GM12878 (cell line): ENCODE measurements at regions of chr6 and their contacts with region 1.

Region 1: DNA sequence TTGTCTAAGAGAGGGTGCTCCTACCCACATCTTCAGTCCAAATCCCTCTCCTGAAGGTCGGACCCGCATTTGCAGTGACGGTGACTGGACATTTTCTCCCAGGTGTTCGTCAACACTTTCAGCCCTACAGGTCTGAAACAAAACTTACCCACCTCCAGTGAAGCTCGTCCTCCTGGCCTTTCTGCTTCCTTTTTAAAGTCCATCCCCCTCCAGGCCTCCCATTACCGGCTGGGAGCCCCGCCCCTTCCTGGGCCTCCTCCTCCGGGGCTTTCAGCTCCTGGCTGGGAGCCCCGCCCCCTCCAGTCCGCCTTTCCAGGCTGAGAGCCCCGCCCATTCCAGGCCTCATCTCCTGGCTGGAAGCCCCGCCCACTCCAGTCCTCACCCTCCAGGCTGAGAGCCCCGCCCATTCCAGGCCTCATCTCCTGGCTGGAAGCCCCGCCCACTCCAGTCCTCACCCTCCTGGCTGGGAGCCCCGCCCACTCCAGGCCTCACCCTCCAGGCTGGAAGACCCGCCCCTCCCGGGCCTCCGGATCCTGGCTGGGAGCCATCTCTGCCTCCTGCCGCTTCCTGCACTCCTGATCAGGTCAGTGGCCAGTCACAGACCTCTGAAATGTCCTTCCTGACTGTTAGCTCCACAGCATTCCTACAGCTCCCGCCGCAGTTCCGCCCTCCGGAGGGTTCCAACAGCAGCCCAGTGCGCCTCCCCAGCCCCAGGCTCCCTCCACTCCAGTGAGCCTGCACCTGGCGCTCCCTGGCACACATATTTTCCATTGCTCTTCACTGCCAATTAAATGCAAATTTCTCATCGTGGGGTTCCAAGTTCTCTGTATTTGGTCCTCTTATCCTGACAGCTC is 98.5 kb downstream of the LY86 start:
- DNase-seq: no peak
- ATAC-seq: no peak
- H3K4me3 ChIP-seq: no peak overlapping the region
- H3K27ac ChIP-seq: no peak overlapping the region
- H3K4me1 ChIP-seq: peaks cover 38% of the 10 kb centered on the region
- H3K27me3 ChIP-seq: no peaks in the 10 kb centered on the region
- CTCF ChIP-seq: no peak
- EP300 ChIP-seq: no peak
- POLR2A ChIP-seq: no peak
- RAD21 ChIP-seq: no peak

Region 2: DNA sequence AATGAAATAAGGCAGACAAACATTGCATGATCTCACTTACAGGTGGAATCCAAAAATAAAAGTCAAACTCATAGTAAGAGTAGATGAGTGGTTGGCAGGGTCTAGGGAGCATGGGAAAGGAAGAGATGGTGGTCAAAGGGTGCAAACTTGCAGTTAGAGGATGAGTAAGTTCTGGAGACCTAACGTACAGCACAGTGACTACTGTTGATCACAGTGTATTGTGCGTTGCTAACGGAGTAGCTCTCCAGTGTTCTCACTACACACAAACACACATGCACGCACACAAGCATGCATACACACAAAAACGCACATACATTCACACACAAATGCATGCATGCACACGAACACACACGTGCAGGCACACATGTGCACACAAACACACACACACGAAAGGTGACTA is 43.6 kb before region 1 on chr6:
- CTCF ChIA-PET with region 1: no interaction called
- POLR2A ChIA-PET with region 1: interaction called, 3 read pairs
- RAD21 ChIA-PET with region 1: interaction called, 8 read pairs
- SMC1A ChIA-PET with region 1: interaction called, 3 read pairs
- in situ Hi-C with region 1: no loop called
- intact Hi-C with region 1: loop called (anchors 2 kb)
- DNase-seq: peak; percentile 91
- ATAC-seq: peak; percentile 93
- H3K4me3 ChIP-seq: no peak overlapping the region
- H3K27ac ChIP-seq: peak overlapping the region; percentile 86
- H3K4me1 ChIP-seq: peaks cover 21% of the 10 kb centered on the region
- H3K27me3 ChIP-seq: no peaks in the 10 kb centered on the region
- CTCF ChIP-seq: no peak
- EP300 ChIP-seq: peak; percentile 84 to 99; a peak in 3 of 4 replicates
- POLR2A ChIP-seq: 0 out of 2 replicates have a peak, but pooled peaks have one; percentile 32
- RAD21 ChIP-seq: peak; percentile 35; the same call in 1 of the 2 replicates

Region 3: DNA sequence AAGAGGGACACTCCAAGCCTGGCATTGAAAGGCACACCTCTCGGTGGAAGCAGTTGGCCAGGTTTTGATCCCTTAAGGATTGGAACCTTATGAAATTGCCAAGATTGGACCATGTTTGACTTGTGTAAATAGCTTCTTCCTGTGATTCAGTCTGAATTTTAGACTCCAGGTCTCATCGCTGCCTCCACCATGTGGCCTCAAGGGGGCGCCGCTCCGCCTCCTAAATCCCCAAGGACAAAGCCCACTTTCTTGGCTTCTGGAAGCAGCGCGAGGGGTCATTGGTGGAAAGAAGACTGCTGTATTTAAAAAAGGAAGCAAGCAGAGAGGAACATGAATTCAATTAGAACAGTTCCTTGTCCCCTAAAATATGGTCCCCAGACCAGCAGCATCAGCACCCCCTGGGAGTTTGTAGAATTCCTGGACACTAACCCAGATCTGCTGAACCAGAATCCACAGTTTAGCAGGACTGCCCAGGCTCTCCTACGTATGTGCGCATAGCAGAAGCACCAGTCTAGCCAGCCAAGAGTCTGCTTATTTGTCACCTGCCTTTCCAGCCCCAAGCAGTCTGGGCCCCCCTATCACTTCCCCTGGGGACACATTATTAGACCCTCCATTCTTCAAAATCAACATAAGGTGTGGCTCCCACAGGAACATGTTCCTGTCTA is 10.0 kb after region 1 on chr6:
- CTCF ChIA-PET with region 1: interaction called, 35 read pairs
- POLR2A ChIA-PET with region 1: interaction called, 3 read pairs
- RAD21 ChIA-PET with region 1: interaction called, 4 read pairs
- SMC1A ChIA-PET with region 1: interaction called, 8 read pairs
- in situ Hi-C with region 1: no loop called
- intact Hi-C with region 1: no loop called
- DNase-seq: no peak
- ATAC-seq: peak; percentile 71
- H3K4me3 ChIP-seq: no peak overlapping the region
- H3K27ac ChIP-seq: no peak overlapping the region
- H3K4me1 ChIP-seq: no peaks in the 10 kb centered on the region
- H3K27me3 ChIP-seq: no peaks in the 10 kb centered on the region; a peak in 1 of 4 replicates
- CTCF ChIP-seq: peak; percentile 53 to 80 (median 66)
- EP300 ChIP-seq: no peak
- POLR2A ChIP-seq: no peak
- RAD21 ChIP-seq: peak; percentile 75

Region 4: DNA sequence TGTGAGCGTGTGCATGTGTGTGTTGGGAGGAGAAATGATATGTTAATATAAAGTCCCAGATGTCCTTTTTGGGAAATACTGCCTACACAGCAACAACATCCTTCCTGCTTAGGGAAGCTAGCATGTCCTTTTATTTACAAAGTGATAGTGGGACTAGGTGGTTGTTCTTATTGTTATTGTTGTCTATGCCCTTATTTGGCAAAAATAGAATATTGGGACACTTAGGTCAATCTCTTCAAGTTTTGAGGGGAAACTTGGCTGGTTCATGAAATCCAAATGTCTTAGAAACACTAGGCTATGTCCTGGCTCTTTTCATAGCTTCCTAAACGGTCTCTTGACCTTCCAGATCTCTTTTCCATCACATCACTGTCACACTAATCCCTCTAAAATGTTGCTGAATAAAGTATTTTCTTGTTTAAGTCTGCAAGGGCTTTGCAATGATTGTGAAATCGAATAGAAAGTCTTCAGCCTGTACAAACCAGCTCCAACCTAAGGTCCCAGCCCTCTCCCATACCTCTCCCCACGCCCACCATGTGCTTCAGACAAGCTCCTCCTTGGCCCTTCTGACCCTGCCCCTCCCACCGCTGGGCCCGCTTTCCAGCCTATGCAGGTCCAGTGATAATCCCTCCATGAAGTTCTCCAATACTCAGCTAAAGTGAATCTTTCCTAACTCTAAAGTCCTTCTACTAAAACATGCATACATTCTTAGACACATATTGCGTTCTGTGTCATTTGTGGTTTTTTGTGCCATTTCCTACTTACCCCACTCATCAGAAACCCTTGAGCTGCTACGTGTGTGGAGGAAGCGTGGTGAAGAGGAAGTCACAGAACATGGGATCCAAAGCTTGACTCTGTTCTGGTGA is 106.6 kb after region 1 on chr6:
- CTCF ChIA-PET with region 1: no interaction called
- POLR2A ChIA-PET with region 1: no interaction called
- RAD21 ChIA-PET with region 1: no interaction called
- SMC1A ChIA-PET with region 1: interaction called, 4 read pairs
- in situ Hi-C with region 1: no loop called
- intact Hi-C with region 1: loop called (anchors 2 kb)
- DNase-seq: no peak
- ATAC-seq: no peak
- H3K4me3 ChIP-seq: no peak overlapping the region
- H3K27ac ChIP-seq: no peak overlapping the region
- H3K4me1 ChIP-seq: peaks cover 28% of the 10 kb centered on the region
- H3K27me3 ChIP-seq: no peaks in the 10 kb centered on the region
- CTCF ChIP-seq: no peak
- EP300 ChIP-seq: no peak
- POLR2A ChIP-seq: no peak
- RAD21 ChIP-seq: no peak

Region 5: GRCh38 chr6:6803572-6803971 is 116.6 kb after region 1 on chr6:
- CTCF ChIA-PET with region 1: no interaction called
- POLR2A ChIA-PET with region 1: interaction called, 3 read pairs
- RAD21 ChIA-PET with region 1: interaction called, 11 read pairs
- SMC1A ChIA-PET with region 1: interaction called, 4 read pairs
- in situ Hi-C with region 1: no loop called
- intact Hi-C with region 1: loop called (anchors 2 kb)
- DNase-seq: no peak
- ATAC-seq: peak; percentile 77
- H3K4me3 ChIP-seq: no peak overlapping the region
- H3K27ac ChIP-seq: no peak overlapping the region
- H3K4me1 ChIP-seq: peaks cover 60% of the 10 kb centered on the region
- H3K27me3 ChIP-seq: no peaks in the 10 kb centered on the region
- CTCF ChIP-seq: no peak
- EP300 ChIP-seq: no peak
- POLR2A ChIP-seq: no peak
- RAD21 ChIP-seq: no peak

Region 6: GRCh38 chr6:7615611-7616383 is 928.8 kb after region 1 on chr6:
- CTCF ChIA-PET with region 1: interaction called, 3 read pairs
- POLR2A ChIA-PET with region 1: no interaction called
- RAD21 ChIA-PET with region 1: no interaction called
- SMC1A ChIA-PET with region 1: no interaction called
- in situ Hi-C with region 1: no loop called
- intact Hi-C with region 1: loop called (anchors 10 kb)
- DNase-seq: no peak
- ATAC-seq: peak; percentile 57
- H3K4me3 ChIP-seq: no peak overlapping the region
- H3K27ac ChIP-seq: no peak overlapping the region
- H3K4me1 ChIP-seq: peaks cover 5% of the 10 kb centered on the region; the same call in 1 of the 2 replicates
- H3K27me3 ChIP-seq: no peaks in the 10 kb centered on the region
- CTCF ChIP-seq: peak; percentile 72 to 83 (median 75)
- EP300 ChIP-seq: no peak
- POLR2A ChIP-seq: no peak
- RAD21 ChIP-seq: peak; percentile 92